ENCODE measurements at regions of chr7 and their contacts with region 1.

Region 1: GRCh38 chr7:37495574-37496184 is 47.0 kb upstream of the ELMO1 start:
- DNase-seq: peak in 1 of 35 experiments; percentile 56
- ATAC-seq: peak in 1 of 4 experiments; percentile 54
- H3K4me3 ChIP-seq: no peak overlapping the region
- H3K4me3 Mint-ChIP-seq: no peak overlapping the region
- H3K27ac ChIP-seq: no peak overlapping the region
- H3K27ac Mint-ChIP-seq: no peak overlapping the region
- H3K4me1 ChIP-seq: no peaks in the 10 kb centered on the region
- H3K4me1 Mint-ChIP-seq: no peaks in the 10 kb centered on the region
- H3K27me3 ChIP-seq: no peaks in the 10 kb centered on the region
- H3K27me3 Mint-ChIP-seq: no peaks in the 10 kb centered on the region

Region 2: GRCh38 chr7:37234928-37235327 is 260.8 kb before region 1 on chr7:
- CTCF ChIA-PET with region 1: interaction called, 12 to 18 read pairs
- POLR2A ChIA-PET with region 1: no interaction called
- DNase-seq: peak in 16 of 35 experiments; percentile 3 to 55 (median 14)
- ATAC-seq: peak in 1 of 4 experiments; percentile 51
- H3K4me3 ChIP-seq: no peak overlapping the region
- H3K4me3 Mint-ChIP-seq: no peak overlapping the region
- H3K27ac ChIP-seq: no peak overlapping the region
- H3K27ac Mint-ChIP-seq: no peak overlapping the region
- H3K4me1 ChIP-seq: peaks cover 0 to 3% of the 10 kb centered on the region in 2 experiments
- H3K4me1 Mint-ChIP-seq: peaks cover 6 to 21% (median 17%) of the 10 kb centered on the region in 3 donors
- H3K27me3 ChIP-seq: no peaks in the 10 kb centered on the region
- H3K27me3 Mint-ChIP-seq: no peaks in the 10 kb centered on the region

Region 3: GRCh38 chr7:37448636-37449361 is 46.9 kb before region 1 on chr7 and contains the start of gene ELMO1:
- CTCF ChIA-PET with region 1: interaction called, 8 to 12 read pairs
- POLR2A ChIA-PET with region 1: no interaction called
- DNase-seq: peak; percentile 65 to 89 (median 76)
- ATAC-seq: peak; percentile 82 to 88 (median 84)
- H3K4me3 ChIP-seq: peak within 1 kb of the TSS; percentile 83 to 96
- H3K4me3 Mint-ChIP-seq: peak within 1 kb of the TSS; percentile 93 to 94 (median 93)
- H3K27ac ChIP-seq: peak within 1 kb of the TSS; percentile 90
- H3K27ac Mint-ChIP-seq: peak within 1 kb of the TSS; percentile 97 to 98
- H3K4me1 ChIP-seq: peaks cover 25 to 34% of the 10 kb centered on the region in 2 experiments
- H3K4me1 Mint-ChIP-seq: peaks cover 51 to 64% (median 55%) of the 10 kb centered on the region in 3 donors
- H3K27me3 ChIP-seq: no peaks in the 10 kb centered on the region
- H3K27me3 Mint-ChIP-seq: peaks cover 0 to 1% of the 10 kb centered on the region in 2 donors
- total RNA-seq, gene ELMO1: 101 to 149 (median 113) TPM

Region 4: DNA sequence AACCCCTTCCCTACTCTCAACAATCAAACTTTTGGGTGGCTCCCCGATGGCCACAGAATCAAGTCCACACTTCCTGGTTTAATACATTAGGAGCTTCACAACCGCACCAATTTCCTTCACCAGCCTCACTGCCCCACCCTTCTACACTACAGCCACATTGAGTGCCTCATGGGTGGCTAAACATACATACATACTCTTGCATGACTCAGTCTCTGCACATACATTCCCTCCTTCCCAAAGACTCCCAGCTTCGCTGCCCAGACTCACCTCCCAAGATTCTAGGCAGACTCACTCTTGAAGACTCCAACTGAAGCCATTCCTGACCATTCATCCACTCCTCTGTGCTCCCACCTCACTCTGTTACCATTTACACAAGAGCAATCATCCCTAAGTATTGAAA is 1397.4 kb after region 1 on chr7:
- CTCF ChIA-PET with region 1: no interaction called
- POLR2A ChIA-PET with region 1: no interaction called
- DNase-seq: no peak
- ATAC-seq: no peak
- H3K4me3 ChIP-seq: no peak overlapping the region
- H3K4me3 Mint-ChIP-seq: no peak overlapping the region
- H3K27ac ChIP-seq: no peak overlapping the region
- H3K27ac Mint-ChIP-seq: no peak overlapping the region
- H3K4me1 ChIP-seq: no peaks in the 10 kb centered on the region
- H3K4me1 Mint-ChIP-seq: peaks cover 16 to 28% (median 18%) of the 10 kb centered on the region in 3 donors
- H3K27me3 ChIP-seq: no peaks in the 10 kb centered on the region
- H3K27me3 Mint-ChIP-seq: no peaks in the 10 kb centered on the region